Left lung (tissue), 14 donors: ENCODE measurements at regions of chr10 and their contacts with region 1.

Region 1: GRCh38 chr10:103069453-103070331 is 123.4 kb downstream of the NT5C2 start:
- DNase-seq: peak; percentile 25 to 76 (median 61)
- ATAC-seq: peak; percentile 97
- H3K4me3 ChIP-seq: no peak overlapping the region
- H3K27ac ChIP-seq: no peak overlapping the region
- H3K4me1 ChIP-seq: peaks cover 0 to 10% of the 10 kb centered on the region in 2 donors
- H3K27me3 ChIP-seq: no peaks in the 10 kb centered on the region
- CTCF ChIP-seq: peak; percentile 52 to 58

Region 2: DNA sequence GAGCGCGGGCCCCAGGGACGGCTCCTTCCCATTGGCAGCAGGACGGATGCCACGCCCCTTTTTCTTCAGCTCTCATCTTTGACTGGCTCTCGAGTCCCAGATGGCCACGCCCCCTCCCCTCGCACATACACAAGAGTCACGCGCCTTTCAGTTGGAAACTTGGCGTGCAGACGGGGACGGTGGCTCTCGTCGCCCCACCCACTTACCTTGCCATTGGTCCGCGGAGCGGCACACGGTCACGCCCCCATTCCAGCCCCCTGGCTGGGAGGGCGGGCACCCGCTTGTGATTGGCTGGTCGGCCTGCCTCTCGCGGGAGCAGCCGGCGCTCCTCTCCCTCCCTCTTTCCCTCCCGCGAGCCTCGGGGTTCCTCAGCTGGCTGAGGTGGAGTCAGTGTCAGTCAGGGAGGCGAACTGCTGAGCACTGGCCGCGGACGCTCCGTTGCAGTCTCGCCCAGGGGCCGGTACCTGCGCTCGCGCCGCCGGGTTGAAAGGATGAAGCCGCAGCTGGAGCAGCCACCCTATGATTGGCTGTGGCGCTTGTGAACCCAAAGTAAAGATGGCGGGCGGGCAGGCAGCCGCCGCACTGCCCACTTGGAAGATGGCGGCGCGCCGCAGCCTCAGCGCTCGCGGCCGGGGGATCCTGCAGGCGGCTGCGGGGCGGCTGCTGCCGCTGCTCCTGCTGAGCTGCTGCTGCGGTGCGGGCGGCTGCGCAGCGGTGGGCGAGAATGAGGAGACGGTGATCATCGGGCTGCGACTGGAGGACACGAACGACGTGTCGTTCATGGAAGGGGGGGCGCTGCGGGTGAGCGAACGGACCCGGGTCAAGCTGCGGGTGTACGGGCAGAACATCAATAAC is 151.5 kb before region 1 on chr10 and contains the start of gene CNNM2:
- intact Hi-C with region 1: loop called in 1 of 2 experiments (anchors 5 kb)
- DNase-seq: peak; percentile 99 to 100 (median 100)
- ATAC-seq: peak; percentile 97
- H3K4me3 ChIP-seq: peak within 1 kb of the TSS; percentile 85 to 94
- H3K27ac ChIP-seq: peak within 1 kb of the TSS; percentile 86 to 87
- H3K4me1 ChIP-seq: peaks cover 30 to 43% of the 10 kb centered on the region in 2 donors
- H3K27me3 ChIP-seq: peaks cover 0 to 19% of the 10 kb centered on the region in 2 donors
- CTCF ChIP-seq: no peak
- polyA plus RNA-seq, gene CNNM2: 6.0 to 9.8 (median 7.6) TPM